Activated CD4-positive, alpha-beta T cell treated with anti-CD3 and anti-CD28 coated beads, Interleukin-2, amount 10 ng/mL, durations not matched to agents 24 days and 14 days (primary cell): ENCODE measurements at regions of chr16 and their contacts with region 1.

Region 1: DNA sequence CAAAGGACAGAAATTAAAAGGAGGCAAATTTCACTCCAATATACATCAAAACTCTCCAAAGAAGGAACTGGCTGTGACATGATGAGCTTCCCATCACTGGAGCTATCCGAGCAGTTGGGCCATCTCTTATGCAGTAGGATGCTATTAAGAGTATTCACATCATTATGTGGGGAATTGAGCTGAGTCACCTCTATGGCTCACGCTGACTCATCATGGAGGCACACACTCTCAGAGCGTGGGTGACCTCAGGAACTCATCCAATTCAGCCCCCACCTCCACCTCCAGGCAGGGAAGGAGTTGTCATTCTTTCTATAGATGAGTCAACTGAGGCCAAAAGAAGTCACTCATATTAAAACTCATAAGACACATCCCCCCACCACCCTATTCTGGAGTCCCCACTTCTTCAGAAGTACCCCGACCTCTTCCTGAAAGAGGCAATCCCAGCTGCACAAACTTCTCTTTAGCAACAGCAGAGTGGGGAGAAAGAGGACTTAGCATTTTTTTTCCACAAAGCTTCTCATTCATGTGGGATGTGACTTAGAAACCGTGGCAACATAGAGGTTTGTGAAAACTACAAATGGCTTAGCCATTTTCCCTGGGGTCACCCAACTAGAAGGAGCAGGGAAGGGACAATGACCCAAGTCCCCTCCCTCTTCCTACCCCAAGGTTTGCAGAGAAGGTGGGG is 32.5 kb downstream of the ABCC12 start:
- DNase-seq: peak; percentile 69
- H3K4me3 Mint-ChIP-seq: peak overlapping the region; percentile 21
- H3K27ac Mint-ChIP-seq: peak overlapping the region; percentile 79
- H3K4me1 Mint-ChIP-seq: peaks cover 25% of the 10 kb centered on the region
- H3K27me3 Mint-ChIP-seq: no peaks in the 10 kb centered on the region

Region 2: GRCh38 chr16:47110939-47111338 is 1012.3 kb before region 1 on chr16:
- intact Hi-C with region 1: loop called (anchors 1 kb)
- DNase-seq: no peak
- H3K4me3 Mint-ChIP-seq: no peak overlapping the region
- H3K27ac Mint-ChIP-seq: no peak overlapping the region
- H3K4me1 Mint-ChIP-seq: peaks cover 10% of the 10 kb centered on the region
- H3K27me3 Mint-ChIP-seq: no peaks in the 10 kb centered on the region